Activated naive CD4-positive, alpha-beta T cell treated with anti-CD3 and anti-CD28 coated beads for 36 hours (primary cell): ENCODE measurements at regions of chr1 and their contacts with region 1.

Region 1: DNA sequence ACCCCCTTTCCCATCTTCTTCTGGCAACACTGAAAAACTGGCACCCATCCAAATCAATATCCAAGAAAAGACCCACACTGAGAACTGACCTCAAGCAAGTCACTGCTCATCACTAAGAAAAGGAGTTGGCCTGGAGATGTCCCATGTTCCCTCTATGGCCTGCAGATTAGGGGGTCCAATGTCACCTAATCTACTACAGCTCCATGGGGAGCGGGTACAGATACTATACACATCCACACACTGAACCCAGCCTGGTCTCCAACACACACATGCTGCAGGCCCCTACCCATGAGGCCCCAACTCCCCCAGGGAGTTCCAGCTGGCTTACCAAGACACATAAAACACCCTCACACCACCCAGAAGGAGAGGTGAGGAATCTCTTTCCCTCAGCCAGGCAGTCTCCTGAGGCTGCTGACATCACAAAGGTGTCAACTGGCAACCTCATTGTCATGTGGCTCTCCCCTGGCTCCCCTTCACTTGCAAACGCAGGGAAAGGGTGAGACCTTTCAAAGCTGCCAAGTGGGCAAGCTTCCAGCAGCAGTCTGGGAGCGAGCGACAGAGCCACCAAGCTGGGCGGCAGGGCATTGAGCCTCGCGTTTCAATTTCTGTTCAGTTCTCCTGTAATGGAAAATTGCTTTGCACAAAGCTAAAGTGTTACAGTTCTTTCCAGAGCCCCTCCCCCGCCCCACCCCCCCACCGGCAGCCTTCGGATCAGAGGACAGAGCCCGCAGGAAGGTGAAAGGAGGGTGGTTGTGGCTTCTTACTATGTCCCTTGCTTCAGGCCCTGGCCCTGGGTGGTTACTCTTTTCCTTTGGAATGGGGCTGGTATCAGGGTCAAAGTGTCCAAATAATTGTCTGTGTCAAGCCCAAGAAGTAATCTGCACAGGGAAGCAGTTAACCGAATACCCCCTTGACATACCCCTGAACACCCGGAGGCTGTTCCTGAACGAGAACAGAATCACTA is at the start of gene LRRC52:
- DNase-seq: peak; percentile 11
- H3K4me3 Mint-ChIP-seq: no peak within 1 kb of the TSS
- H3K27ac Mint-ChIP-seq: no peak within 1 kb of the TSS
- H3K4me1 Mint-ChIP-seq: peaks cover 4% of the 10 kb centered on the region
- H3K27me3 Mint-ChIP-seq: peaks cover 32% of the 10 kb centered on the region
- total RNA-seq, gene LRRC52: not detected

Region 2: DNA sequence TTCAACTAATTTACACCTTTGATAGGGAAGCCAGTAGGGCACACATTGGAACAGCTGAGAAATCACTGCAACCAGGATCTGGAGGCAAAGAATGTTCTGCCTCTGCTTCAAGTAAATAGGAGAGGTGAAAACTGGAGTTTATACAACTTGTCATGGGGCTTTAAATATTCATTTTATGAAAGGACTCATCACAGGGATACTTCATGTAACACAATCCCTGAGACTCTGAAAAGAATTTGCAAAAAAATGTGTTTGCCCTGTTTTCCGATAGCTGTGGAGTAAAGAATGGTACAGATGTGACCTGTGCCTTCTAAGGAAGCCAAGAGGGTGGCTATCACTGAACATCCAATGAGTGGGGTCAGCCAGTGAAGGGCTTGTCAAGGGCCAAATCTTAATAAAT is 339.3 kb before region 1 on chr1:
- CTCF ChIA-PET with region 1: no interaction called
- intact Hi-C with region 1: no loop called
- DNase-seq: no peak
- H3K4me3 Mint-ChIP-seq: no peak overlapping the region
- H3K27ac Mint-ChIP-seq: no peak overlapping the region
- H3K4me1 Mint-ChIP-seq: no peaks in the 10 kb centered on the region
- H3K27me3 Mint-ChIP-seq: no peaks in the 10 kb centered on the region

Region 3: GRCh38 chr1:165490175-165490574 is 53.6 kb before region 1 on chr1:
- CTCF ChIA-PET with region 1: no interaction called
- intact Hi-C with region 1: no loop called
- DNase-seq: no peak
- H3K4me3 Mint-ChIP-seq: no peak overlapping the region
- H3K27ac Mint-ChIP-seq: no peak overlapping the region
- H3K4me1 Mint-ChIP-seq: peaks cover 2% of the 10 kb centered on the region
- H3K27me3 Mint-ChIP-seq: peaks cover 16% of the 10 kb centered on the region

Region 4: DNA sequence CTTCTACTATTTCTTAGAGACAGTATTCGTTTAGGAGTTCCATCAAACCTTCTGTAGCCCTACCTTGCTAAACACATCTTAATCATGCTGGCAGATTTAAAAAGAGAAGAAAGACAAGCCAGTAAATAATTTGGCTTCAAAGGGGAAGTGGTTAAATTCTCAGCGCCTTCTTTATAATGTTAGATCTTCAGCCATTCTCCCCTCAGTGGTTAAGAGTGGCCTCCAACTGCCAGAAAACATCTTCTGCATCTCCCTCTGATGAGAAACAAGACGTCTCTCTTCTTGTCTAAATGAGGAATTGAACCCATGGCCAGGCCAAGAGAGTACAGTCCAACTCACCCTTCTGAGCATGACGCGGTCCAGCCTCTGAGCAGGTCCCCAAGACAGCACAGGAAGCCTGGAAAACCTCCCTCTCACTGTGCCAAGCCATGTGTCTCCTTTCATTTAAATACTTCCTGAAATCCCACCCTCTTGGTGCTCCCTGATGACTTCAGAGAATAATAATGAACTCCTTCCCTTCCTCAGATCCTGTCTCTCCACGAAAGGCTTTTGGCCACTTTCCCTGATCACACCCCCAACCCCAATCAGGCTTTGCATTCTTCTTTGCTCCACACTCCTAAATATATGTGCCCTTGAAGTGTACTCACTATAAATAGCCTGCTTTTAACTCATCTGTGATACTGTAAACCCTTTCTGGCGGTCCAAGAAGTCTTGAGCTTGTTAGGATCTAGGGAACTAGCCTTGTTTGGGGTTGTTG is 16.4 kb before region 1 on chr1:
- CTCF ChIA-PET with region 1: no interaction called
- intact Hi-C with region 1: loop called (anchors 1 kb)
- DNase-seq: no peak
- H3K4me3 Mint-ChIP-seq: no peak overlapping the region
- H3K27ac Mint-ChIP-seq: no peak overlapping the region
- H3K4me1 Mint-ChIP-seq: no peaks in the 10 kb centered on the region
- H3K27me3 Mint-ChIP-seq: peaks cover 35% of the 10 kb centered on the region